ENCODE measurements at regions of chr20 and their contacts with region 1.

Region 1: GRCh38 chr20:8213831-8214587 is 81.9 kb downstream of the PLCB1 start:
- DNase-seq: peak; percentile 4
- H3K4me3 Mint-ChIP-seq: peak overlapping the region; percentile 78
- H3K27ac Mint-ChIP-seq: peak overlapping the region; percentile 78
- H3K4me1 Mint-ChIP-seq: peaks cover 75% of the 10 kb centered on the region
- H3K27me3 Mint-ChIP-seq: peaks cover 2% of the 10 kb centered on the region

Region 2: GRCh38 chr20:8156235-8157079 is 57.6 kb before region 1 on chr20:
- intact Hi-C with region 1: loop called (anchors 2 kb)
- DNase-seq: no peak
- H3K4me3 Mint-ChIP-seq: no peak overlapping the region
- H3K27ac Mint-ChIP-seq: no peak overlapping the region
- H3K4me1 Mint-ChIP-seq: peaks cover 48% of the 10 kb centered on the region
- H3K27me3 Mint-ChIP-seq: no peaks in the 10 kb centered on the region

Region 3: DNA sequence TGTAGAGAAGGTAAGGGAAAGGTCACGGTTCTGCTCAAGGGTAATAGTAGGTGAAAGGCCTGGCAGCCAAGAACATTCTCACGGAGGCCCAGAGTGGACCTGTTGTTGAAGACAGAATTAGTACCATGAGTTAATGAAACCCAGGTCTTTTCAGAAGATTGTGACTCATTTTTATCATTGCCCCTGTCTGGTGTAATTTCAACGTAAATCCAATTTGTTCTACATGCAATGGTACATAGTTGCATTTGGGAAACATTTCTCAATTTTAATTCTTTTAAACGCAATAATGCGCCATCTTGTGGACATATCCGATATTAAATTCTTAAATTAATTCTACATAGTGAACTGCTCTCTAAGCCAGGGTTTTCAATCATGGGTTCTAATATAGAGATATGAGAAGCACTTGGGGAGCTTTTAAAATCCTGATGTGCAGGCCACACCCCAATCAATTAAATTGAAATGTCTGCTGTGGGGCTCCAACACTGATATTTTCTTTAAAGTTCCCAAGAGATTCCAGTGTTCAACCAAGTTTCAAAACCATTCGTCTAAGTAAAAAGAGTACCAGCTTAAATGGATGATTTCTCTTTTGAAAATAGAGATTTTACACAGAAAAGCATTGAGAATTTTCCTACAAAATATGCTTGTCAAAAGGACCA is 175.5 kb after region 1 on chr20:
- intact Hi-C with region 1: loop called (anchors 5 kb)
- DNase-seq: no peak
- H3K4me3 Mint-ChIP-seq: no peak overlapping the region
- H3K27ac Mint-ChIP-seq: no peak overlapping the region
- H3K4me1 Mint-ChIP-seq: peaks cover 7% of the 10 kb centered on the region
- H3K27me3 Mint-ChIP-seq: peaks cover under 1% of the 10 kb centered on the region

Region 4: DNA sequence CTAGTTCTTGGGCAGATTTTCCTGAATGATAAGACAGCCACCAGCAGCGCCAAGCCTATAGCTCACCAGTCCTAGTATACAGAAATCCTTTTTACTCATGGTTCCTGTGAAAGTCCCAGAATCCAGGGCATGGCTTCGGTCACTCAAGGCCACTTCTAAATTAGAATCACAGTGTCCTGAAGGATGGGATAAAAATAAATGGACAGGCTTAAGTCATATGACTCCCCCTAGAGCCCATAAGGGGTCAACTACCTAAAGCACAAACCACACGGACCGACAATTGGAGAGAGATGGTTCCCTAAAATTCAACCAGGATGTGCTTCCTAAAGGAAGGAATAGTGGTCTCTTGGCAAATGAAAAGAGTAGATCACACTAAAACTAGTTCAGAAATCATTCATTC is 450.8 kb after region 1 on chr20:
- intact Hi-C with region 1: loop called (anchors 5 kb)
- DNase-seq: no peak
- H3K4me3 Mint-ChIP-seq: no peak overlapping the region
- H3K27ac Mint-ChIP-seq: no peak overlapping the region
- H3K4me1 Mint-ChIP-seq: no peaks in the 10 kb centered on the region
- H3K27me3 Mint-ChIP-seq: no peaks in the 10 kb centered on the region

Region 5: GRCh38 chr20:9857403-9857802 is 1643.4 kb after region 1 on chr20:
- intact Hi-C with region 1: no loop called
- DNase-seq: no peak
- H3K4me3 Mint-ChIP-seq: no peak overlapping the region
- H3K27ac Mint-ChIP-seq: no peak overlapping the region
- H3K4me1 Mint-ChIP-seq: no peaks in the 10 kb centered on the region
- H3K27me3 Mint-ChIP-seq: no peaks in the 10 kb centered on the region

Measured in activated T-helper 1 cell treated with anti-CD3 and anti-CD28 coated beads, Interleukin-12 subunit alpha, Interleukin-12 subunit beta, Interleukin-2, Interleukin-4 antibody, amounts not matched to agents 30 ng/mL and 10 ng/mL and 1 ng/mL, durations not matched to agents 14 hours and 24 hours and 36 hours (primary cell).